ENCODE measurements at regions of chr10 and their contacts with region 1.

Region 1: GRCh38 chr10:95246579-95247051 is 44.2 kb downstream of the PDLIM1 start:
- DNase-seq: peak; percentile 78
- H3K4me3 Mint-ChIP-seq: no peak overlapping the region
- H3K27ac Mint-ChIP-seq: no peak overlapping the region
- H3K4me1 Mint-ChIP-seq: no peaks in the 10 kb centered on the region
- H3K27me3 Mint-ChIP-seq: peaks cover 18% of the 10 kb centered on the region

Region 2: GRCh38 chr10:94630017-94630688 is 616.5 kb before region 1 on chr10:
- CTCF ChIA-PET with region 1: no interaction called
- intact Hi-C with region 1: loop called (anchors 1 kb)
- DNase-seq: no peak
- H3K4me3 Mint-ChIP-seq: no peak overlapping the region
- H3K27ac Mint-ChIP-seq: no peak overlapping the region
- H3K4me1 Mint-ChIP-seq: no peaks in the 10 kb centered on the region
- H3K27me3 Mint-ChIP-seq: peaks cover 5% of the 10 kb centered on the region

Region 3: GRCh38 chr10:95183271-95184230 is 63.1 kb before region 1 on chr10:
- CTCF ChIA-PET with region 1: interaction called, 7 read pairs
- intact Hi-C with region 1: loop called (anchors 1 kb)
- DNase-seq: peak; percentile 74
- H3K4me3 Mint-ChIP-seq: peak overlapping the region; percentile 61
- H3K27ac Mint-ChIP-seq: no peak overlapping the region
- H3K4me1 Mint-ChIP-seq: peaks cover 3% of the 10 kb centered on the region
- H3K27me3 Mint-ChIP-seq: peaks cover 29% of the 10 kb centered on the region

Region 4: GRCh38 chr10:95236068-95236903 is 10.3 kb before region 1 on chr10:
- CTCF ChIA-PET with region 1: interaction called, 14 read pairs
- intact Hi-C with region 1: no loop called
- DNase-seq: peak; percentile 26
- H3K4me3 Mint-ChIP-seq: no peak overlapping the region
- H3K27ac Mint-ChIP-seq: peak overlapping the region; percentile 75
- H3K4me1 Mint-ChIP-seq: peaks cover 19% of the 10 kb centered on the region
- H3K27me3 Mint-ChIP-seq: peaks cover 20% of the 10 kb centered on the region

Region 5: DNA sequence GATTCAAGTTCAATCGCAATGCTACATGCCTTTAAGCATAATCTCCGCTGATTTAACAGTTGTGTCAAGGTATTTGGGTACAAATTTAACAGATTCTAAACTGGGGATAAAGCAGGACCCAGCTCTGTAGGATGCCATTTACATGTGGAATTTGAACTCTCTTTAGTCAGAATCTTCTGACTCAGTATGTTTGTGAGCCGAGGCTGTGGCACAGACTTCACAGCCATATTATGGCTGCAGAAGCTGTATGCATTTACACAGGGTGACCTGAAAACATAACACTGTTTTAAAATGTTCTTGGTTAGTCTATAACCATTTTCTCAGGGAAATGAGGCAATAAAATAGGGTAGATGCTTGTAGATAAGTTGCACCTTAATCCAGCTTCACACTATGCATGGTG is 35.5 kb after region 1 on chr10:
- CTCF ChIA-PET with region 1: no interaction called
- intact Hi-C with region 1: no loop called
- DNase-seq: no peak
- H3K4me3 Mint-ChIP-seq: no peak overlapping the region
- H3K27ac Mint-ChIP-seq: no peak overlapping the region
- H3K4me1 Mint-ChIP-seq: no peaks in the 10 kb centered on the region
- H3K27me3 Mint-ChIP-seq: peaks cover 19% of the 10 kb centered on the region

Region 6: GRCh38 chr10:95333997-95334804 is 87.6 kb after region 1 on chr10:
- CTCF ChIA-PET with region 1: no interaction called
- intact Hi-C with region 1: no loop called
- DNase-seq: no peak
- H3K4me3 Mint-ChIP-seq: no peak overlapping the region
- H3K27ac Mint-ChIP-seq: no peak overlapping the region
- H3K4me1 Mint-ChIP-seq: no peaks in the 10 kb centered on the region
- H3K27me3 Mint-ChIP-seq: no peaks in the 10 kb centered on the region

Region 7: DNA sequence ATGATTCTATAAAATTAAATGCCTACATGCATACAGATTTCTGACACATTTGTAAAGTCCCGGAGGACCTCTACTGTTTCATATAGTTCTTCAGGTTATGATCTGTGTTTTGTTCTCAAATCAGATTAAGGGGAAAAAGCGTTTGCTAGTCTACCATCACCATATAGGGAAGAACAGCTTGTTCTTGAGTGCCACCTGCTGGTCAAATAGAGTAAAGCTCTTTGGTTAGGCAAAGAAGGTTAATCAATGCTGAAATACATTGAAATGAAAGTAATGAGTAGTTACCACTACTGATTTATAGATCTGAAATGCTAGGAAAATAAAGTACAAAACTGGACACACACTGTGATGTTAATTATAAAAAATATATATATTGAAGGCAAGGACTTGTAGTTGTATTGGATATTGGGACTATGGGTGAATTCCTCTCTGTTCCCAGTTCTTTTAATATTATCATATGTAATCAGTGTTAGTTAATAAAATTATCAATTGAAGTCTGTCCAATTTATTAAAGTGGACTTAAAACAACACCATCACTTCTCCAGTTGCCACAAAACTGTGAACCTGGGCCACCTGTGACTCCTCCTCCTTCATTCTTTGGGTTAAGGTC is 116.8 kb after region 1 on chr10:
- CTCF ChIA-PET with region 1: interaction called, 160 read pairs
- intact Hi-C with region 1: loop called (anchors 1 kb)
- DNase-seq: peak; percentile 68
- H3K4me3 Mint-ChIP-seq: no peak overlapping the region
- H3K27ac Mint-ChIP-seq: no peak overlapping the region
- H3K4me1 Mint-ChIP-seq: no peaks in the 10 kb centered on the region
- H3K27me3 Mint-ChIP-seq: peaks cover 7% of the 10 kb centered on the region

Region 8: GRCh38 chr10:95601116-95601719 is 354.6 kb after region 1 on chr10:
- CTCF ChIA-PET with region 1: no interaction called
- intact Hi-C with region 1: loop called (anchors 5 kb)
- DNase-seq: peak; percentile 68
- H3K4me3 Mint-ChIP-seq: no peak overlapping the region
- H3K27ac Mint-ChIP-seq: no peak overlapping the region
- H3K4me1 Mint-ChIP-seq: no peaks in the 10 kb centered on the region
- H3K27me3 Mint-ChIP-seq: no peaks in the 10 kb centered on the region

Region 9: GRCh38 chr10:95613330-95613729 is 366.7 kb after region 1 on chr10:
- CTCF ChIA-PET with region 1: no interaction called
- intact Hi-C with region 1: no loop called
- DNase-seq: no peak
- H3K4me3 Mint-ChIP-seq: no peak overlapping the region
- H3K27ac Mint-ChIP-seq: no peak overlapping the region
- H3K4me1 Mint-ChIP-seq: no peaks in the 10 kb centered on the region
- H3K27me3 Mint-ChIP-seq: no peaks in the 10 kb centered on the region